Activated naive CD8-positive, alpha-beta T cell treated with anti-CD3 and anti-CD28 coated beads, Interleukin-2, amount 10 ng/mL, durations not matched to agents 7 days and 5 days (primary cell): ENCODE measurements at regions of chr9 and their contacts with region 1.

Region 1: DNA sequence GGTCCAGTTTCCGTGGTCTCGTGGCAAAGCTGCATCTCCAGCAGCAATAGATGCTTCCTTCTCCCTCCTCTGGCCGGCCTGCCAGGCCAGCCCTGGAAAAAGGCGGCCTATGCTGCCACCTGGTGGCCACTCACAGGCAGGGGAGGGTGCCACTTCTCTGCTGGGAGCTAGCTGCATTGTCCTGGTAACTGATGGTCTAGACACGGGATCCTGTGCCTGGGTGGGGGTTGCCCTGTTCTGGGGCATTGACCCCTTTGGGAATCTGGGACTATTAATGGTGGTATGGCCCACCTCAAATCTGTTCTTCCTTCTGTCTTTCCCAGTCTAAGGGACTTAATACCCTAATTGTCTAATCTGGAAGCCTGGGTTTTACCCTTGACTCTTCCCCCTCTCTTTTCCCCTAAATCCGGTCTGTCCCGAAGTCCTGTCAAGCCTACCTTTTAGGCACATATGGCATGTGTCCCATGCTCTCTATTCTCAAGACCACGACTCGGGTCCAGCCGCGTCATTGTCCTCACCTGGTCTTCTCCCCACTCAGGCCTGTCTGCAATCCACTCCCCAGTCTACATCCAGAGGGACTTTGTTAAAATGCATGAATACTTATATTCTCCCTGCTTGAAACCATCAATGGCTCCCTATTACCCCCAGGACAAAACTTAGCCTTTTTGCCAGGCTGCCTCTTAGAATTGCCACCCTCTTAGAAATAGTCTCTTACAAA is 20.0 kb upstream of the PTGS1 start:
- DNase-seq: peak; percentile 88
- ATAC-seq: peak; percentile 87
- H3K4me3 Mint-ChIP-seq: no peak overlapping the region
- H3K27ac Mint-ChIP-seq: no peak overlapping the region
- H3K4me1 Mint-ChIP-seq: peaks cover 27% of the 10 kb centered on the region
- H3K27me3 Mint-ChIP-seq: peaks cover 11% of the 10 kb centered on the region

Region 2: DNA sequence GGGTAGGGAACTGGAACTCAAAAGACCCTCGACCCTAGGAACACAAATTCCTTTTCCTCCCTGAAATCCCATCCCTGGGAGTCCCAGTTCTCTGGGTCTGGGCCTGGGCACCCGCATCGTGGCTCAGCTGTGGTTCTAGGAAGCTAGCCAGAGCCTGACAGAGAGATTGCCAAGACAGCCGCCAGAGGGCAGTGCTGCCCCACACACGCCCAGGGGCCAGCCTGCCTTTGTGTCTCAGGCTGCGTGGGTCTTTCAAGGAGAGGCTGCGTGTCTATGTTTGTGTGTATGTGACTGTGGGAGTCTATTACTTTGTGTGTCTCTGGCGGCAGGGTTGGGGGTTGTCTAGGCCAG is 225.7 kb before region 1 on chr9:
- POLR2A ChIA-PET with region 1: interaction called, 12 read pairs
- DNase-seq: peak; percentile 89
- ATAC-seq: peak; percentile 73
- H3K4me3 Mint-ChIP-seq: peak overlapping the region; percentile 3
- H3K27ac Mint-ChIP-seq: no peak overlapping the region
- H3K4me1 Mint-ChIP-seq: peaks cover 23% of the 10 kb centered on the region
- H3K27me3 Mint-ChIP-seq: peaks cover 25% of the 10 kb centered on the region

Region 3: DNA sequence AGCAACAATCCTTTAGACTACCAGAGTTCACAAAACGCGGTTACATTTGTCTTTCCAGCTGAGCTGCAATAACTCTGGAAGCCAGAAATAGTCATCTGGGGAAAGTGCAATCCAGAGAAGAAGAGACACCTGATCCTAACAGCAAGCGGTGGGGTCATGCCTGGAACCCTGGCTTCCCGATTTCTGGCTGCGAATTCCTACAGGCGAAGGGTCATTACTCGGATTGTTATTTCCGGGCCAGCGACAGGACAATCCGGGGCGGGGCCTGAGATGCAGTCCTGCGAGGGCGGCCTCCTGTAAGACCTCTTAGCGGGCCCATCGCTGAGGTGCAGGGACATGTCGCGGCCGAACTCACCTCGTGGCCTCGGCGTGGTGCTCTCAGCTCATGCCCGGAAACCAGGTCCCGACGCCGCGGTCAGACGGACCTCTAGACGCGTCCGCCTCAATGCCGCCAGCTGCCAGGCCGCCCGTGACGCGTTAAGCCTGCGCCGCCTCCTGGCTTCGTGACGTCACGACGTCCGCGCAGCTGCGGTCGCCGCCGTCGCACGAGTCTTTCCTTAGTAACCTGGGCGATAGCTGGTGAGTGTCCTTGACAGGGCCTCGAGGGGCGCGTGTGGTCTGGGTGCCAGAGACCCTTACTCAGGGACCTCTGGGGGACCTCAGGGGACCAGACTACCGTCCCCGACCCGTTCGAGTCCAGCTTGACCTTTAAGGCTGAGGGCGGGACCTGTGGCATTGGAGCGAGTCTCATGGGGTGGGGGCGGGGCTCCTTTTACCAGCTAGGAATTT is 86.2 kb before region 1 on chr9 and contains the starts of genes MRRF and RBM18:
- POLR2A ChIA-PET with region 1: interaction called, 15 read pairs
- DNase-seq: peak; percentile 96
- ATAC-seq: peak; percentile 83
- H3K4me3 Mint-ChIP-seq: peak within 1 kb of the TSS; percentile 99
- H3K27ac Mint-ChIP-seq: peak within 1 kb of the TSS; percentile 99
- H3K4me1 Mint-ChIP-seq: peaks cover 30% of the 10 kb centered on the region
- H3K27me3 Mint-ChIP-seq: no peaks in the 10 kb centered on the region
- total RNA-seq, gene MRRF: 28.4 to 29.0 TPM
- total RNA-seq, gene RBM18: 20.9 to 23.4 TPM